ENCODE measurements at regions of chr5 and their contacts with region 1.

Region 1: DNA sequence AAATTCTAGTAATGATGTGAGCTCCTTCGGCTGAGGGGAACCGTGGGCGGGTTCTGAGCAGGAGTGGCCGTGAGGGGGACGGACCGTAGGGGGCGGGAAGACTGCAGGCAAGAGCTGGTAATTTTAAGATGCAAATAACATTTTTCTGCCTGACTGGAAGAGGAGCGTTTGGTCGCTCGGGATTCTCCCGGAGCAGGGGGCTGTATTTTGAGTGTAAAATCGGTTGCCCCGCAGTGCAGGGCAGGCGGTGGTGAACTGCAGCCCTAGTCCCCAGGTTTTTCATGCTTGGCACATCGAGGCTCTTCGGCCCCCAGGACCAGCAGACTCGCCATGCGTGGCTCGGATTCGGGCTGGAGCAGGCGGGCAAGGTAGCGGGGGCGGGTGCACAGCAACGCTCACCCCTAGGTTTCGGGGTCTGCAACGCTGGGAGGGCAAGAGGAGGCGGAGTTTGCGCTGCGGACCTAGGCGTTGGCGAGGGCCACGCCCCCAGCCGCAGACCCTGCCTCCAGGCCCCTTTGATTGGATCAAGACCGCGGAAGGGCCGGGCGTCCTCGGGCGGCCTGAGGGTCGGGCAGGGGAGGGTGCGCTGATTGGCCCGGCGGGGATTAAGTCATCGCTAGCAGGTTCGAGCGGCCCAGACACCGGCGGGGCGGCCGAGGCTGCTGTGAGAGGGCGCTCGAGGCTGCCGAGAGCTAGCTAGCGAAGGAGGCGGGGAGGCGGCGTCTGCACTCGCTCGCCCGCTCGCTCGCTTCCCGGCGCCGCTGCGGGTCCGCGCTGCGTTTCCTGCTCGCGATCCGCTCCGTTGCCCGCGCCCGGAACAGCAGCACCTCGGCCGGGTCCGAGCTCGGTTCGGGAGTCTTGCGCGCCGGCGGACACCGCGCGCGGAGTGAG is at the start of gene ARHGAP26:
- DNase-seq: peak; percentile 91 to 99
- H3K4me3 ChIP-seq: peak within 1 kb of the TSS; percentile 69 to 86
- H3K27ac ChIP-seq: peak within 1 kb of the TSS; percentile 85 to 89
- H3K4me1 ChIP-seq: peaks cover 0 to 16% of the 10 kb centered on the region in 2 donors
- H3K27me3 ChIP-seq: no peaks in the 10 kb centered on the region
- CTCF ChIP-seq: peak in 2 of 3 experiments; percentile 14 to 27
- total RNA-seq, gene ARHGAP26: 34.9 TPM

Region 2: GRCh38 chr5:142713121-142713706 is 56.8 kb before region 1 on chr5:
- intact Hi-C with region 1: loop called (anchors 1 kb)
- DNase-seq: peak; percentile 49 to 93
- H3K4me3 ChIP-seq: peak overlapping the region; percentile 52 to 65
- H3K27ac ChIP-seq: peak overlapping the region; percentile 82 to 84
- H3K4me1 ChIP-seq: peaks cover 0 to 5% of the 10 kb centered on the region in 2 donors
- H3K27me3 ChIP-seq: no peaks in the 10 kb centered on the region
- CTCF ChIP-seq: peak; percentile 92 to 95 (median 94)

Region 3: DNA sequence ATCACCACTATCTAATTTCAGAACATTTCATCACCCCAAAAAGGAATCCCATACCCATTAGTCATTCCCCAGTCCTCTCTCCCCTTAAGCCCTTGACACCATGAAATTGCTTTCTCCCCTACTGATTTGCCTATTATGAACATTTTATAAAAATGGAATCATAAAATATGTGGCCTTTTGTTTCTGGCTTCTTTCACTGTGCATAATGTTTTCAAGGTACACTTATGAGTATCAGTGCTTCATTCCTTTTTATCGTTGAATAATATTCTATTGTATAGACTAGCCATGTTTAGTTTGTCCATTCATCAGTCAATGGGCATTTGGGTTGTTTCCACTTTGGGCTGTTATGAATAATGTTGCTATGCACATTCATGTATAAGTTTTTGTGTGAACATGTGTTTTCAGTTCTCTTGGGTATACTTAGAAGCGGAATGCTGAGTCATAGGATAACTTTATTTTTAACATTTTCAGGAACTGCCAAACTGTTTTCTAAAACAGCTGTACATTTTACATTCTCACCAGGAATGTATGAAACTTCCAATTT is 43.7 kb before region 1 on chr5:
- intact Hi-C with region 1: loop called (anchors 1 kb)
- DNase-seq: peak in 1 of 2 donors; percentile 8
- H3K4me3 ChIP-seq: no peak overlapping the region
- H3K27ac ChIP-seq: peak overlapping the region; percentile 7 to 46
- H3K4me1 ChIP-seq: peaks cover 7 to 16% of the 10 kb centered on the region in 2 donors
- H3K27me3 ChIP-seq: no peaks in the 10 kb centered on the region
- CTCF ChIP-seq: no peak

Region 4: DNA sequence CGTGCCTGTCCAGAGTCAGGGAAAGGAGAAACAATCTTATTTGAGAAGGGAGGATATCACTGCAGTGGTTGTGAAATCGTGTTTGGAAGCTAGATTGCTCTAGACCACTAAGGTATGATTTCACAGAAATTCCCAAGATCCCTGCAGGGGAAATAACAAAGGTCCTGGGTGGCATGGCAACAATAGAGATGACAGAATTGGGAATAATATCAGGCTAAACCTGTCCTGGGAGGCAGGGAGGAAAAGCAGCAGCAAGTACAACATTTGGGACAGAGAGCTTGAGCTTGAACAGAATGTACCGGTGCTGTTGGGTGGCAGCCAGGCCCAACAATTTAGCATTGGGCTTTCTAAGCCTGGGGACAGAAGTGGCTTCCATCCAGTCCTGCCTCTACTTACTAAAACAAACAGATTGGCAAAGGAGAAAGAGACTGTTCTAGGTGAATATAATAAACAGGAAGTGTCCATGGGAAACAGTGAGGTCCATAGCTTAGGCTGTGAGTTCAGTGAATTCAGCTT is 16.8 kb before region 1 on chr5:
- intact Hi-C with region 1: loop called (anchors 1 kb)
- DNase-seq: peak; percentile 33 to 88
- H3K4me3 ChIP-seq: peak overlapping the region in 1 of 2 donors; percentile 7
- H3K27ac ChIP-seq: peak overlapping the region; percentile 82 to 90
- H3K4me1 ChIP-seq: peaks cover 26 to 38% of the 10 kb centered on the region in 2 donors
- H3K27me3 ChIP-seq: no peaks in the 10 kb centered on the region
- CTCF ChIP-seq: no peak

Region 5: DNA sequence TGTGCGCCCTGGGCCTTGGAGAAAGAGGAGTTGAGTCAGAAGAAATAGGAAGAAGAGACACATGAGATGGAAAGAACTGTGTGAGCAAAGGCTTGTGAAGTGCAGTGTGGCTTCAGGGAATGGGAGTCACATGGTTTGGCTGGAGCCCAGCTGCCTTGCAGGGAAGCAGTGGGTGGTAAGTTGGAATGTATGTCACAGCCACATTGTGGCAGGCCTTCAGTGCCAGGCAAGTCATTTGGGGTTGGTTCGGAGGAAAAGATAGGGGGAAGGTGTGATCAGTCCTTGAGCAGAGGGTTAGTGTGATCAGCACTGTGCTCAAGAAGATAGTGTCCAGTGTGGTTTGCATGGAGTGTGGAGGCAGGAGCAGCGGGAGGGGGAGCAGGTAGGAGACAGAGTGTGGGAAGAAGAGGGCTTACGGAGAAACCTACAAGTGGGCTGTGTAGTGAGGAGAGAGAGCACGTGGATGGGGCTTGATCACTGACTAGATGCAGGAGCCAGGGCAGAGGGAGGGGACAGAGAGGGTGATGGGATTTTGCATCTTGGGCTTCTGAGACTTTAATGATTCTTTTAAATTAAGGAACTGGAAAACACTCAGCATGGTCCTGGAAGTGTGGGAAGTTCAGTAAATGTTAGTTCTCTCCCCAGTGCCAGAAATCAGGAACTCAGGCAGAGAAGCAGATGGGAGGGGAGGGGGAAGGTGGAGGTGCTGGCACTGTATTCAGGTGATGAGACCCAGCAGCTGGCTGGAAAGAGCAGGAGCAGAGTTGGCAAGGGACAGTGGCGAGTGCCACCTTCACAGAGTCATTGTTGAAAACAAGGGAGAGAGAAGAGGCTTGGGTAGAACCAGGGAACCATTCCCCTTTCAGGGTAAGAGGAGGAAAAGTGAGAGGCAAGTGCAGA is 46.8 kb after region 1 on chr5:
- intact Hi-C with region 1: loop called (anchors 5 kb)
- DNase-seq: peak; percentile 36 to 75
- H3K4me3 ChIP-seq: no peak overlapping the region
- H3K27ac ChIP-seq: peak overlapping the region; percentile 66 to 69
- H3K4me1 ChIP-seq: peaks cover 10 to 56% of the 10 kb centered on the region in 2 donors
- H3K27me3 ChIP-seq: no peaks in the 10 kb centered on the region
- CTCF ChIP-seq: no peak

Region 6: GRCh38 chr5:142841511-142842265 is 71.7 kb after region 1 on chr5:
- intact Hi-C with region 1: loop called (anchors 1 kb)
- DNase-seq: peak; percentile 70 to 94
- H3K4me3 ChIP-seq: no peak overlapping the region
- H3K27ac ChIP-seq: peak overlapping the region; percentile 69 to 81
- H3K4me1 ChIP-seq: peaks cover 39 to 66% of the 10 kb centered on the region in 2 donors
- H3K27me3 ChIP-seq: no peaks in the 10 kb centered on the region
- CTCF ChIP-seq: no peak

Region 7: GRCh38 chr5:142874537-142874936 is 104.6 kb after region 1 on chr5:
- intact Hi-C with region 1: loop called (anchors 2 kb)
- DNase-seq: peak; percentile 55 to 96
- H3K4me3 ChIP-seq: no peak overlapping the region
- H3K27ac ChIP-seq: peak overlapping the region; percentile 42 to 56
- H3K4me1 ChIP-seq: peaks cover 13 to 27% of the 10 kb centered on the region in 2 donors
- H3K27me3 ChIP-seq: no peaks in the 10 kb centered on the region
- CTCF ChIP-seq: no peak